Activated CD4-positive, alpha-beta memory T cell treated with anti-CD3 and anti-CD28 coated beads for 36 hours (primary cell): ENCODE measurements at regions of chr15 and their contacts with region 1.

Region 1: DNA sequence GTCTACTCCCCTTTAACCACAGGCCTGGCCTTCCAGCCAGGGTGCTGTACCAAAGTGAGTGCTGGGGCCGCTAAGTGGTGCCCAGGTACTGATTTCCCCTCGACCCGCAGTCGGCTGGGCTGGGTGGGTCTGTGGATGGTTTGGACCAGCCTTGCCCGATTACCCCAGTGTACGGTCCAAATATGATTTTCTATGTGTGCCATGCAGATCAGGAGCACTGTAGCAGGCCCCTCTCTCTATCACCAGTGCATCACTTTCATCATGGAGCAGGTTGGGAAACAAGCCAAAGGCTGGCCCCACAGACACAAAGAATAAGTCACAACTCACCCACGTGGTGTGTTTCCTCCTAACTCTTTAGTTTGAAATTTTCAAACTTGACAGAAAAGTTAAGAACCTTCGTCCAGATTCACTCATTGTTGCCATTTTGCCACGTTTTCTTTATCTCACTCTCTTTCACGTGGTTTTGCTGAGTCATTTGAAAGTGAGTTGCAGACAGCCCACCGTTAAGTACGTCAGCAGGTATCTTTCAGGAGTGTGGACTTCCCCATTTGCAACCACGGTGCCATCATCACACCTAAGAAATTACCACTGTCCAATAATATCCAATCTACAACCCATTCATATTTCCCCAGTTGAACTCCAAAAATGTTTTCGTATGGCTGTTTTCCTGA is 37.0 kb downstream of the ZNF710 start:
- DNase-seq: peak; percentile 82
- H3K4me3 Mint-ChIP-seq: peak overlapping the region; percentile 27
- H3K27ac Mint-ChIP-seq: peak overlapping the region; percentile 96
- H3K4me1 Mint-ChIP-seq: peaks cover 73% of the 10 kb centered on the region
- H3K27me3 Mint-ChIP-seq: no peaks in the 10 kb centered on the region

Region 2: GRCh38 chr15:90001683-90002427 is 36.2 kb before region 1 on chr15:
- CTCF ChIA-PET with region 1: no interaction called
- POLR2A ChIA-PET with region 1: interaction called, 4 read pairs
- intact Hi-C with region 1: loop called (anchors 1 kb)
- DNase-seq: peak; percentile 78
- H3K4me3 Mint-ChIP-seq: peak overlapping the region; percentile 86
- H3K27ac Mint-ChIP-seq: peak overlapping the region; percentile 86
- H3K4me1 Mint-ChIP-seq: peaks cover 52% of the 10 kb centered on the region
- H3K27me3 Mint-ChIP-seq: no peaks in the 10 kb centered on the region

Region 3: DNA sequence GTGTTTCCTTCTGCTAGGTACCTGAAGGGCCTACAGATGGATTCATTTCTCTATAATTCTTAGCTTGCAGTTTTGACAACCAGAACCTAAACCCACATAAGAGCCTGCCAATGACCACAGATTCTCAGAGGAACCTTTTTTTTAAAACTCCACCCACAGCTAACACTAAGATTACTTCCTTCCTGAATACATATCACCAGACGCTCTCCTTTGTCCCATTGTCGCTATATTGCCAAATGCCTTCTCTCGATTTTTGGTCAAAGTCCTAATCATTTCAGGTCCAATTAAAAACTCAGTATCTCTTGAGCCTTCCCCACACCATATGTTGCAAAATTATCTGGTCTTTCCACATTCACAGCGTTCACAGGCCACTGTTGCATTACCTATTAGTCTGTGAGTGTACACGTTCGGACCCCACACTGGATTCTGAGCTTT is 24.6 kb before region 1 on chr15:
- CTCF ChIA-PET with region 1: no interaction called
- POLR2A ChIA-PET with region 1: interaction called, 5 read pairs
- intact Hi-C with region 1: loop called (anchors 1 kb)
- DNase-seq: peak; percentile 15
- H3K4me3 Mint-ChIP-seq: peak overlapping the region; percentile 20
- H3K27ac Mint-ChIP-seq: peak overlapping the region; percentile 57
- H3K4me1 Mint-ChIP-seq: peaks cover 58% of the 10 kb centered on the region
- H3K27me3 Mint-ChIP-seq: no peaks in the 10 kb centered on the region

Region 4: DNA sequence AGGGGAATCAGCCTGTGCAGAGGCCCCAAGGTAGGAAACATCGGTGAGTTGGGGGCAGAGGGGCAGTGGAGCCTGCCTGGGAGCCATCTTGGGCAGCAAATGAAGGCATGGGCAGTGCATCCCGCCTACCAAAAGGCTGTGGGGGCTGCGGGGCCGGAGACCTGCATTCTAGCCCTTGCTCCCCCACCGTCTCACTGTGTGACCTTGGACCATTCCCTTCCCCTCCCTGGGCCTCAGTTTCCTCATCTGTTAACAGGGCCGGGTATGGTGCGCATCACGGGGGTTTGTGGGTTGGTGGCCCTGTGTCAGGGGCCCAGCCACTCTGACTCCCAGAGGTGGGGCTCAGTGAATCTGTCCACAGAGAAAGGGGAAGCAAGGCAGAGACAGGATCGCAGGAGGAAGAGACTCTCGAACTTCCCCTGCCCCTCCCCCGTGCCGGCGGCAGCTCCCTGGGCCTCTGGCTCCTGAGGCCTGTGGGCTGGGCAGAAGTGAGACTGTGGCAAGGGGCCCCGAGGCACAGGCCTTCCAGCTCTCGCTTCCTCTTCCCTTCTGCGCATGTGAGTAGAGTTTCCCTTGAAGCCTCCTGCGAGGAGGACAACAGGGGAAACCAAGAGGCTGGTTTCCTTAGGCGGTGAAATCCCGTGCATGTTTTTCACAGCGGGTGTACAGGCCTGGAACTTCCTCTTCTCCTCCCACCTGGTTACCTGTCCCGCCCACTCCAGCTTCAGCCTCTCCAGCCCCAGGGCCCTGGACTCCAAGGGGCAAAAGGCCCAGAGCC is 21.3 kb after region 1 on chr15:
- CTCF ChIA-PET with region 1: no interaction called
- POLR2A ChIA-PET with region 1: no interaction called
- intact Hi-C with region 1: loop called (anchors 1 kb)
- DNase-seq: peak; percentile 92
- H3K4me3 Mint-ChIP-seq: peak overlapping the region; percentile 52
- H3K27ac Mint-ChIP-seq: peak overlapping the region; percentile 97
- H3K4me1 Mint-ChIP-seq: peaks cover 58% of the 10 kb centered on the region
- H3K27me3 Mint-ChIP-seq: no peaks in the 10 kb centered on the region

Region 5: DNA sequence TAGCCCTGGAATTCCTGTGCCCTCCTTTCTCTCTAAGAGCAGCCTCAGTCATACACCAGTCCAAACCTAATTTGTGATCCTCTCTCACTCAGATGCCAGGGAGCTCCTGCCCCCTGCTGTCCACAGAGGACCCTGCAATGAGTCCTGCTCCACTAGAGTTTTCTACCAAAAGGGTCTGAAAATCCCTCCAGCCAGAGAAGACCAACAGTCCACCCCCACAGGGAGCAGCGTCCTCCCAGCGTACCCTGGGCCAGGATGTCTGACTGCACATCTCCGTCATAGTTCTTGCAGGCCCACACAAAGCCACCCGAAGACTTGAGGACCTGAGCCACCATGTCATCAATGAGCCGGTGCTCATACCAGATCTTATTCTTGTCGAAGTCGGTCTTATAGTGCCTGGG is 48.8 kb after region 1 on chr15:
- CTCF ChIA-PET with region 1: interaction called, 4 read pairs
- POLR2A ChIA-PET with region 1: no interaction called
- intact Hi-C with region 1: loop called (anchors 2 kb)
- DNase-seq: peak; percentile 73
- H3K4me3 Mint-ChIP-seq: no peak overlapping the region
- H3K27ac Mint-ChIP-seq: peak overlapping the region; percentile 49
- H3K4me1 Mint-ChIP-seq: peaks cover 4% of the 10 kb centered on the region
- H3K27me3 Mint-ChIP-seq: no peaks in the 10 kb centered on the region

Region 6: DNA sequence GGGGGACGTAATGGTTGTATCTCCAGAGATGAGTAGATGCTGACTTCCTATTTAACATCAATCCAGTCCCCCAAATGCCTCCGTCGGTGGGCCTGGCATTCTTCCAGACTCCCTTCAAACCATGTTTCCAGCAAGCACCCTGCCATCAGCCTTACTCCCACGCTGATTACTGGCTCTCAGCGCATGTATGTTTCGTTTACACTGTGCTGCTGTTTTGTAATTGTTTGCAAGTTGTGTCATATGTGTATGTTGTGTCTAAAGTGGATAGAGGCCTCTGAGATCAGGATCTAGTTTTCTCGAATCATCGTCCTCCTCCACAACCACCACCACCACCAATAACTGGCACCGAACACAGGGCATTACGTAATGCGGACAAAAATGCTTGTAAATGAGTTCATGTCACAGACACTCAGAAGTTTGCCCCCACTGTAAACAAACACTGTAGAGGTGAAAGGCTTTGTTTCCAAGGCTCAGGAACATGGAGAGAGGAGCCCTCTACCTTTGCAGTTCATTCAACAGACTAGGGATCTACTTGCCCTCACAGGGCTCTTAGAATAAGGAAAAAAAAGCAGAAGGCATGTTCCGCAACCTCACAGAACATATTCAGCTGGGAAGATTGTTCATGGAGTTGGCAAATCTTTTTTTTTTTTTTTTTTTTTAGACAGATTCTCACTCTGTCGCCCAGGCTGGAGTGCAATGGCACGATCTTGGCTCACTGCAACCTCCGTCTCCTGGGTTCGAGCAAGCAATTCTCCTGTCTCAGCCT is 116.9 kb after region 1 on chr15:
- CTCF ChIA-PET with region 1: no interaction called
- POLR2A ChIA-PET with region 1: no interaction called
- intact Hi-C with region 1: no loop called
- DNase-seq: no peak
- H3K4me3 Mint-ChIP-seq: no peak overlapping the region
- H3K27ac Mint-ChIP-seq: no peak overlapping the region
- H3K4me1 Mint-ChIP-seq: peaks cover 7% of the 10 kb centered on the region
- H3K27me3 Mint-ChIP-seq: no peaks in the 10 kb centered on the region